ENCODE measurements at regions of chr3 and their contacts with region 1.

Region 1: GRCh38 chr3:16290007-16290826 is 25.2 kb downstream of the OXNAD1 start:
- DNase-seq: peak; percentile 58 to 67 (median 64)
- H3K4me3 ChIP-seq: peak overlapping the region; percentile 68 to 89
- H3K4me3 Mint-ChIP-seq: peak overlapping the region; percentile 93 to 99 (median 98)
- H3K27ac ChIP-seq: peak overlapping the region; percentile 76
- H3K27ac Mint-ChIP-seq: peak overlapping the region; percentile 90 to 99 (median 96)
- H3K4me1 ChIP-seq: peaks cover 78% of the 10 kb centered on the region
- H3K4me1 Mint-ChIP-seq: peaks cover 48 to 82% (median 72%) of the 10 kb centered on the region in 4 donors
- H3K27me3 ChIP-seq: no peaks in the 10 kb centered on the region
- H3K27me3 Mint-ChIP-seq: no peaks in the 10 kb centered on the region

Region 2: GRCh38 chr3:15831930-15832329 is 458.3 kb before region 1 on chr3:
- CTCF ChIA-PET with region 1: no interaction called
- POLR2A ChIA-PET with region 1: no interaction called
- intact Hi-C with region 1: no loop called
- DNase-seq: no peak
- H3K4me3 ChIP-seq: no peak overlapping the region
- H3K4me3 Mint-ChIP-seq: no peak overlapping the region
- H3K27ac ChIP-seq: no peak overlapping the region
- H3K27ac Mint-ChIP-seq: no peak overlapping the region
- H3K4me1 ChIP-seq: peaks cover under 1% of the 10 kb centered on the region
- H3K4me1 Mint-ChIP-seq: peaks cover 14 to 39% (median 18%) of the 10 kb centered on the region in 4 donors
- H3K27me3 ChIP-seq: no peaks in the 10 kb centered on the region
- H3K27me3 Mint-ChIP-seq: no peaks in the 10 kb centered on the region

Region 3: GRCh38 chr3:16200411-16200810 is 89.8 kb before region 1 on chr3:
- CTCF ChIA-PET with region 1: no interaction called
- POLR2A ChIA-PET with region 1: no interaction called
- intact Hi-C with region 1: no loop called
- DNase-seq: no peak
- H3K4me3 ChIP-seq: no peak overlapping the region
- H3K4me3 Mint-ChIP-seq: no peak overlapping the region
- H3K27ac ChIP-seq: no peak overlapping the region
- H3K27ac Mint-ChIP-seq: no peak overlapping the region
- H3K4me1 ChIP-seq: no peaks in the 10 kb centered on the region
- H3K4me1 Mint-ChIP-seq: peaks cover 0 to 3% (median 1%) of the 10 kb centered on the region in 4 donors
- H3K27me3 ChIP-seq: no peaks in the 10 kb centered on the region
- H3K27me3 Mint-ChIP-seq: peaks cover 5 to 12% of the 10 kb centered on the region in 2 donors

Region 4: GRCh38 chr3:16279010-16279801 is 11.0 kb before region 1 on chr3:
- CTCF ChIA-PET with region 1: interaction called, 17 read pairs
- POLR2A ChIA-PET with region 1: interaction called, 6 read pairs
- intact Hi-C with region 1: no loop called
- DNase-seq: no peak
- H3K4me3 ChIP-seq: no peak overlapping the region
- H3K4me3 Mint-ChIP-seq: no peak overlapping the region
- H3K27ac ChIP-seq: no peak overlapping the region
- H3K27ac Mint-ChIP-seq: no peak overlapping the region
- H3K4me1 ChIP-seq: no peaks in the 10 kb centered on the region
- H3K4me1 Mint-ChIP-seq: peaks cover 7 to 17% (median 11%) of the 10 kb centered on the region in 4 donors
- H3K27me3 ChIP-seq: no peaks in the 10 kb centered on the region
- H3K27me3 Mint-ChIP-seq: no peaks in the 10 kb centered on the region

Region 5: DNA sequence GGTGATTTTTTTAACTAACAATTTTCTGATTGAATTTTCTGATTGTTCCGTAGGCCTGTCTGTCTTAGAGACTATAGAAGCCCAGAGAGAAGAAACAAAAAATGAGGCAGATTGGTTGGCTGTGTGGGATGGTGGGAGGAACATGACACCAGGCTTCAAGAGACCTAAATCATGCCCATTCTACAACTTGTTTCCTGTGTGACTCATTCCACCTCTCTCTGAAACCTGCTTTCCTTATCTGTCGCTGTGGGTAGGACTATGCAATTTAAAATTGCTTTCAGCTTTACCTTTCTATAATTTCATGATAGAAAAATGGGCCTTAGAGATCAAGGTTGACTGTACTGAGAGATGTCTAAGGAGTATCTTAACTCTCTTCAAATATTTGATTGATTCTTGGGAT is 19.3 kb after region 1 on chr3:
- CTCF ChIA-PET with region 1: interaction called, 488 read pairs
- POLR2A ChIA-PET with region 1: interaction called, 361 read pairs
- intact Hi-C with region 1: no loop called
- DNase-seq: peak; percentile 59 to 88 (median 65)
- H3K4me3 ChIP-seq: no peak overlapping the region
- H3K4me3 Mint-ChIP-seq: peak overlapping the region; percentile 54 to 90 (median 80)
- H3K27ac ChIP-seq: peak overlapping the region; percentile 59
- H3K27ac Mint-ChIP-seq: peak overlapping the region; percentile 86 to 99 (median 89)
- H3K4me1 ChIP-seq: peaks cover 98% of the 10 kb centered on the region
- H3K4me1 Mint-ChIP-seq: peaks cover 79 to 95% (median 89%) of the 10 kb centered on the region in 4 donors
- H3K27me3 ChIP-seq: no peaks in the 10 kb centered on the region
- H3K27me3 Mint-ChIP-seq: no peaks in the 10 kb centered on the region

Region 6: GRCh38 chr3:16332904-16333426 is 42.7 kb after region 1 on chr3:
- CTCF ChIA-PET with region 1: interaction called, 27 read pairs
- POLR2A ChIA-PET with region 1: interaction called, 16 read pairs
- intact Hi-C with region 1: no loop called
- DNase-seq: no peak
- H3K4me3 ChIP-seq: no peak overlapping the region
- H3K4me3 Mint-ChIP-seq: peak overlapping the region in 1 of 8 donors; percentile 7
- H3K27ac ChIP-seq: no peak overlapping the region
- H3K27ac Mint-ChIP-seq: peak overlapping the region in 5 of 7 donors; percentile 4 to 90 (median 65)
- H3K4me1 ChIP-seq: peaks cover 13% of the 10 kb centered on the region
- H3K4me1 Mint-ChIP-seq: peaks cover 21 to 49% (median 28%) of the 10 kb centered on the region in 4 donors
- H3K27me3 ChIP-seq: no peaks in the 10 kb centered on the region
- H3K27me3 Mint-ChIP-seq: no peaks in the 10 kb centered on the region

Region 7: DNA sequence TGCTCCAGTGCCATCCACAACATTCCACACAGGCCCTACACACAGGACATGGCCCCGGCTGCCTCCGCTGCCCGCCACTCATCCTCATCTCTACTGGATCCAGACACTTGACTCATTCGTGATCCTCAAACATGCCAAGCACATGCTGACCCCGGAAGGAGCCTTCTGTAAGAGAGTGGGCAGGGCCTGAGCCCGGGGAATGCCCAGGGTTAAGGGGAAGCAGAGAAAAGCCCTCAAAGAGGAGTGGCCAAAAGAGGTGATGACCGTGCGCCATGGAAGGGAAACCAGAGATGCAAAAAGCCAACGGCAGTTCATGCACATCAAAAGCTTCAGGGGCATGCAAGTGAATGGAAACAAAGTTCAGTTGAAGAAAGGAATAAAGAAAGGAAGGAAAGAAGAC is 177.2 kb after region 1 on chr3:
- CTCF ChIA-PET with region 1: no interaction called
- POLR2A ChIA-PET with region 1: no interaction called
- intact Hi-C with region 1: loop called (anchors 5 kb)
- DNase-seq: peak in 4 of 5 donors; percentile 16 to 76 (median 34)
- H3K4me3 ChIP-seq: no peak overlapping the region
- H3K4me3 Mint-ChIP-seq: peak overlapping the region in 7 of 8 donors; percentile 26 to 84 (median 71)
- H3K27ac ChIP-seq: no peak overlapping the region
- H3K27ac Mint-ChIP-seq: peak overlapping the region; percentile 73 to 98 (median 94)
- H3K4me1 ChIP-seq: peaks cover 43% of the 10 kb centered on the region
- H3K4me1 Mint-ChIP-seq: peaks cover 43 to 66% (median 57%) of the 10 kb centered on the region in 4 donors
- H3K27me3 ChIP-seq: no peaks in the 10 kb centered on the region
- H3K27me3 Mint-ChIP-seq: no peaks in the 10 kb centered on the region

Region 8: DNA sequence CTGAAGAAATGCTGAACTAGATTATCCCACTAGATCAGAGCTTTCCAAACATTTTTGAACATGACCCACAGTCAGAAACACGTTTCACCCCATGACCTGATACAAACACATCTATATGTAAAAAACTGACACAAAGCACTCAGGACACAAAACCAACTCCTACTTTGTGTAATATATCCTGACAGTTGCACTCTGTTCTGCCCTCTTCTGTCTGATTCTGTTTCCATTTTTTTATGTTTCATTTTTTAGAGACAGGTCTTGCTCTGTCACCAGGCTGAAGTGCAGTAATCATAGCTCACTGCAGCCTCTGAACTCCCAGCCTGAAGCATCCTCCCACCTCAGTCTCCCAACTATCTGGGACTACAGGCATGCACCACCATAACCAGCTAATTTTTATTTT is 239.0 kb after region 1 on chr3:
- CTCF ChIA-PET with region 1: interaction called, 27 read pairs
- POLR2A ChIA-PET with region 1: interaction called, 3 read pairs
- intact Hi-C with region 1: loop called (anchors 1 kb)
- DNase-seq: peak in 3 of 5 donors; percentile 13 to 22 (median 16)
- H3K4me3 ChIP-seq: no peak overlapping the region
- H3K4me3 Mint-ChIP-seq: no peak overlapping the region
- H3K27ac ChIP-seq: no peak overlapping the region
- H3K27ac Mint-ChIP-seq: peak overlapping the region in 2 of 7 donors; percentile 64 to 65
- H3K4me1 ChIP-seq: no peaks in the 10 kb centered on the region
- H3K4me1 Mint-ChIP-seq: peaks cover 0 to 5% (median 2%) of the 10 kb centered on the region in 4 donors
- H3K27me3 ChIP-seq: no peaks in the 10 kb centered on the region
- H3K27me3 Mint-ChIP-seq: peaks cover 0 to 1% of the 10 kb centered on the region in 2 donors